ENCODE measurements at regions of chr9 and their contacts with region 1.

Region 1: GRCh38 chr9:72315510-72316311 is 49.3 kb downstream of the ZFAND5 start:
- DNase-seq: no peak
- ATAC-seq: peak; percentile 81
- H3K4me3 ChIP-seq: peak overlapping the region; percentile 2 to 19; a peak in 3 of 4 replicates
- H3K27ac ChIP-seq: peak overlapping the region; percentile 36
- H3K4me1 ChIP-seq: peaks cover 31 to 34% of the 10 kb centered on the region in 2 experiments
- H3K27me3 ChIP-seq: no peaks in the 10 kb centered on the region
- CTCF ChIP-seq: no peak
- POLR2A ChIP-seq: no peak
- RAD21 ChIP-seq: no peak; the same call in 1 of the 2 replicates

Region 2: GRCh38 chr9:72305102-72305546 is 10.6 kb before region 1 on chr9:
- CTCF ChIA-PET with region 1: interaction called, 5 read pairs
- POLR2A ChIA-PET with region 1: interaction called, 15 read pairs
- RAD21 ChIA-PET with region 1: no interaction called
- intact Hi-C with region 1: no loop called
- DNase-seq: peak; percentile 95
- ATAC-seq: peak; percentile 100
- H3K4me3 ChIP-seq: peak overlapping the region; percentile 49 to 54
- H3K27ac ChIP-seq: no peak overlapping the region; the same call in 1 of the 2 replicates
- H3K4me1 ChIP-seq: peaks cover 4 to 29% of the 10 kb centered on the region in 2 experiments
- H3K27me3 ChIP-seq: no peaks in the 10 kb centered on the region
- CTCF ChIP-seq: no peak
- POLR2A ChIP-seq: peak; percentile 6
- RAD21 ChIP-seq: no peak

Region 3: GRCh38 chr9:72485821-72486593 is 170.3 kb after region 1 on chr9:
- CTCF ChIA-PET with region 1: no interaction called
- POLR2A ChIA-PET with region 1: no interaction called
- RAD21 ChIA-PET with region 1: no interaction called
- intact Hi-C with region 1: no loop called
- DNase-seq: no peak
- ATAC-seq: no peak
- H3K4me3 ChIP-seq: no peak overlapping the region
- H3K27ac ChIP-seq: no peak overlapping the region
- H3K4me1 ChIP-seq: peaks cover 0 to 5% of the 10 kb centered on the region in 2 experiments; a peak in 1 of 4 replicates
- H3K27me3 ChIP-seq: no peaks in the 10 kb centered on the region
- CTCF ChIP-seq: no peak
- POLR2A ChIP-seq: no peak
- RAD21 ChIP-seq: no peak

Region 4: GRCh38 chr9:73643379-73644013 is 1327.8 kb after region 1 on chr9:
- CTCF ChIA-PET with region 1: no interaction called
- POLR2A ChIA-PET with region 1: no interaction called
- RAD21 ChIA-PET with region 1: no interaction called
- intact Hi-C with region 1: no loop called
- DNase-seq: no peak
- ATAC-seq: no peak
- H3K4me3 ChIP-seq: no peak overlapping the region
- H3K27ac ChIP-seq: no peak overlapping the region
- H3K4me1 ChIP-seq: no peaks in the 10 kb centered on the region
- H3K27me3 ChIP-seq: no peaks in the 10 kb centered on the region
- CTCF ChIP-seq: no peak
- POLR2A ChIP-seq: no peak
- RAD21 ChIP-seq: no peak